Mammary epithelial cell (primary cell): ENCODE measurements at regions of chr16 and their contacts with region 1.

Region 1: GRCh38 chr16:19338335-19338734 is 52.8 kb downstream of the CLEC19A start:
- DNase-seq: no peak
- H3K4me3 ChIP-seq: no peak overlapping the region
- H3K27ac ChIP-seq: no peak overlapping the region
- H3K4me1 ChIP-seq: no peaks in the 10 kb centered on the region
- H3K27me3 ChIP-seq: no peaks in the 10 kb centered on the region
- CTCF ChIP-seq: no peak

Region 2: DNA sequence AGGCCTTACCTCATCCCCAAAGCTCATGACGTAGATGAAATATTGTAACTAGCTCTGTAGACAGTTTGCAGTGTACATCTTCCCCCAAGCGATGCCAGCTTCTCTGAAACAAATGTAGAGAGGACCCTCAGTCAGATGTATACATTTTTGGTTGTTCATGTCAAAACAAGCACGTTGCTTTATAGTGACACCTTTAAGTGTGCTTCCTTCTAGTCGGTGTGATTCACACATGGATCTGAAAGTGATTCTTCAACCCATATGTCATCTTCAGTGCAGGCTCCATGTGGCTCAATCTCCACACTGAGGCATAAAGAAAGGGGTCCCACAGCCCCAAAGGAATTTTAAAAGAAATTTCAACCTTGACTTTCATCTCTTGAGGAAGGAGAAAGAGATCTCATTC is 83.7 kb before region 1 on chr16:
- CTCF ChIA-PET with region 1: no interaction called
- dilution Hi-C with region 1: loop called (anchors 5 kb)
- in situ Hi-C with region 1: no loop called
- intact Hi-C with region 1: no loop called
- DNase-seq: no peak
- H3K4me3 ChIP-seq: no peak overlapping the region
- H3K27ac ChIP-seq: no peak overlapping the region
- H3K4me1 ChIP-seq: no peaks in the 10 kb centered on the region
- H3K27me3 ChIP-seq: no peaks in the 10 kb centered on the region
- CTCF ChIP-seq: no peak

Region 3: GRCh38 chr16:19294156-19294649 is 44.1 kb before region 1 on chr16:
- CTCF ChIA-PET with region 1: no interaction called
- dilution Hi-C with region 1: loop called (anchors 5 kb)
- in situ Hi-C with region 1: no loop called
- intact Hi-C with region 1: no loop called
- DNase-seq: no peak
- H3K4me3 ChIP-seq: no peak overlapping the region
- H3K27ac ChIP-seq: no peak overlapping the region
- H3K4me1 ChIP-seq: no peaks in the 10 kb centered on the region
- H3K27me3 ChIP-seq: peaks cover under 1% of the 10 kb centered on the region
- CTCF ChIP-seq: no peak

Region 4: DNA sequence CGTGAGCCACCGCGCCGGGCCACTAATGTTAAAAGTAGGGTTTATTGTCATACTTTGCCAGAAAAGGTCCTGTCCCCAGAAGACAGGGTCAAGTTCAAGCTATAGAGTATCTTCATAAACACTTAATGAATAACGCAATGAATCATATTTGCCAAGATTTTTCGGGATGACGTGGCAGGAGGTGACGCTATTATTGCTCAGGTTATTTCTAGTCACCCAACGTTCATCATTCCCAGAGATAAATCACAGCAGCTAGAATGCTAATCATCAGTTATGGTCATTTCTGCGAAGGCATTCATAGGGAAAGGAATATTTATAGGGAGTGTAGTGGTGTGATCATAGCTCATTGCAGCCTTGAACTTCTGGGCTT is 81.3 kb after region 1 on chr16:
- CTCF ChIA-PET with region 1: no interaction called
- dilution Hi-C with region 1: loop called (anchors 5 kb)
- in situ Hi-C with region 1: no loop called
- intact Hi-C with region 1: no loop called
- DNase-seq: peak; percentile 85
- H3K4me3 ChIP-seq: no peak overlapping the region
- H3K27ac ChIP-seq: no peak overlapping the region
- H3K4me1 ChIP-seq: no peaks in the 10 kb centered on the region
- H3K27me3 ChIP-seq: no peaks in the 10 kb centered on the region
- CTCF ChIP-seq: no peak